ENCODE measurements at regions of chr19 and their contacts with region 1.

Region 1: GRCh38 chr19:1103708-1104310 is at the start of gene GPX4:
- DNase-seq: peak; percentile 100
- H3K4me3 Mint-ChIP-seq: peak within 1 kb of the TSS; percentile 71
- H3K27ac Mint-ChIP-seq: peak within 1 kb of the TSS; percentile 78
- H3K4me1 Mint-ChIP-seq: peaks cover 10% of the 10 kb centered on the region
- H3K27me3 Mint-ChIP-seq: no peaks in the 10 kb centered on the region
- CTCF ChIP-seq: no peak
- total RNA-seq, gene GPX4: 179 and 191 TPM in 2 replicates

Region 2: GRCh38 chr19:970695-971094 is 133.1 kb before region 1 on chr19:
- CTCF ChIA-PET with region 1: no interaction called
- POLR2A ChIA-PET with region 1: no interaction called
- intact Hi-C with region 1: no loop called
- DNase-seq: no peak
- H3K4me3 Mint-ChIP-seq: no peak overlapping the region
- H3K27ac Mint-ChIP-seq: no peak overlapping the region
- H3K4me1 Mint-ChIP-seq: no peaks in the 10 kb centered on the region
- H3K27me3 Mint-ChIP-seq: no peaks in the 10 kb centered on the region
- CTCF ChIP-seq: peak; percentile 79

Region 3: GRCh38 chr19:1026189-1027019 is 77.4 kb before region 1 on chr19 and contains the start of gene CNN2:
- CTCF ChIA-PET with region 1: no interaction called
- POLR2A ChIA-PET with region 1: interaction called, 66 read pairs
- intact Hi-C with region 1: no loop called
- DNase-seq: peak; percentile 80
- H3K4me3 Mint-ChIP-seq: peak within 1 kb of the TSS; percentile 86
- H3K27ac Mint-ChIP-seq: peak within 1 kb of the TSS; percentile 96
- H3K4me1 Mint-ChIP-seq: peaks cover 12% of the 10 kb centered on the region
- H3K27me3 Mint-ChIP-seq: no peaks in the 10 kb centered on the region
- CTCF ChIP-seq: no peak
- total RNA-seq, gene CNN2: 112 and 166 TPM in 2 replicates

Region 4: GRCh38 chr19:1064661-1065605 is 38.9 kb before region 1 on chr19:
- CTCF ChIA-PET with region 1: interaction called, 3 read pairs
- POLR2A ChIA-PET with region 1: interaction called, 21 read pairs
- intact Hi-C with region 1: loop called (anchors 5 kb)
- DNase-seq: peak; percentile 74
- H3K4me3 Mint-ChIP-seq: peak overlapping the region; percentile 72
- H3K27ac Mint-ChIP-seq: no peak overlapping the region
- H3K4me1 Mint-ChIP-seq: peaks cover 23% of the 10 kb centered on the region
- H3K27me3 Mint-ChIP-seq: no peaks in the 10 kb centered on the region
- CTCF ChIP-seq: peak; percentile 79

Region 5: GRCh38 chr19:1177322-1178114 is 73.7 kb after region 1 on chr19:
- CTCF ChIA-PET with region 1: no interaction called
- POLR2A ChIA-PET with region 1: interaction called, 13 read pairs
- intact Hi-C with region 1: loop called (anchors 5 kb)
- DNase-seq: peak; percentile 99
- H3K4me3 Mint-ChIP-seq: peak overlapping the region; percentile 69
- H3K27ac Mint-ChIP-seq: peak overlapping the region; percentile 98
- H3K4me1 Mint-ChIP-seq: peaks cover 41% of the 10 kb centered on the region
- H3K27me3 Mint-ChIP-seq: no peaks in the 10 kb centered on the region
- CTCF ChIP-seq: peak; percentile 26

Region 6: DNA sequence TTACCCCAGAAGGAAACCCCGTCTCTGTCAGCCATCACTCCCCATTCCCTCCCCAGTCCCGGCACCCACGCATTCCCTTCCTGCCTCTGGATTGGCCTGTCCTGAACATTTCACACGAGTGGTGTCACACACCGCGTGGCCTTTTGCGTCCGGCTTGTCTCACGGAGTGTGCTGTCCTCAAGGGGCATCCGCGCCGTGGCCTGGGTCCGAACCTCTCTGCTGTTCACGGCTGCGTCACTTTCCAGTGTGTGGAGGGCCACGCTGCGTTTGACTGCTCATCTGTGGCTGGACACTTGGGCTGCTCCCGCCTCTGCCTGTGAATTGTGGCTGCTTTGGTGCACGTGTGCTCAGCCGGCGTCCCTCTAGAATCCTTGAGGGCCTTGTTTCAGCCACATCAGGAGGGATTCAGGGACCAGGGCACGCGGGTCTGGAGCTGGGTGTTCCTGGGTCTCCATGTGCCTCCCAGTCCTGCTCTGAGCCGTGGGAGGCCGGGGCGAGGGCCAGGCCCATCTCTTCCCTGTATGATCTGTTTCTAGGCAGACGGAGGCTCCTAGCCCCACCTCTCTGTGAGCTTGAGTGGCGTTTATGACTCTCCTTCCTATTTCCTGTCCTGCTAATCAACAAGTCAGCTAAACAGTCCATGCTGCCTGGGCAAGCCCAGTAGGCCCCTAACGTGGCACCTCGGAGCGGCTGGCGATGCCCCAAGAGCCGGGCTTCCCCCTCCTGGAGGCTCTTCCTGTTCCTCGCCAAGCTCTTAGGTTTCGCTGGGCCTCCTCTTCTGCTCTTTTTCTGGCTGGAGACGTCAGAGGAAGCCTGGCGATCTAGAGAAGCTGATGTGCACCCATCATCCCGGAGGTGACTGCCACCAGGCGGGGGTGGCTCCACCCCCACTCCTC is 109.8 kb after region 1 on chr19:
- CTCF ChIA-PET with region 1: interaction called, 3 read pairs
- POLR2A ChIA-PET with region 1: interaction called, 14 read pairs
- intact Hi-C with region 1: no loop called
- DNase-seq: peak; percentile 91
- H3K4me3 Mint-ChIP-seq: peak overlapping the region; percentile 63
- H3K27ac Mint-ChIP-seq: peak overlapping the region; percentile 89
- H3K4me1 Mint-ChIP-seq: peaks cover 46% of the 10 kb centered on the region
- H3K27me3 Mint-ChIP-seq: no peaks in the 10 kb centered on the region
- CTCF ChIP-seq: no peak

Measured in MCF 10A (cell line).